Mucosa of descending colon (tissue), 3 donors: ENCODE measurements at regions of chr11 and their contacts with region 1.

Region 1: GRCh38 chr11:68383976-68384501 is 71.6 kb downstream of the LRP5 start:
- DNase-seq: peak in 2 of 3 donors; percentile 78 to 88
- ATAC-seq: no peak
- H3K4me3 ChIP-seq: no peak overlapping the region
- H3K4me1 ChIP-seq: peaks cover 28% of the 10 kb centered on the region
- CTCF ChIP-seq: peak; percentile 87

Region 2: DNA sequence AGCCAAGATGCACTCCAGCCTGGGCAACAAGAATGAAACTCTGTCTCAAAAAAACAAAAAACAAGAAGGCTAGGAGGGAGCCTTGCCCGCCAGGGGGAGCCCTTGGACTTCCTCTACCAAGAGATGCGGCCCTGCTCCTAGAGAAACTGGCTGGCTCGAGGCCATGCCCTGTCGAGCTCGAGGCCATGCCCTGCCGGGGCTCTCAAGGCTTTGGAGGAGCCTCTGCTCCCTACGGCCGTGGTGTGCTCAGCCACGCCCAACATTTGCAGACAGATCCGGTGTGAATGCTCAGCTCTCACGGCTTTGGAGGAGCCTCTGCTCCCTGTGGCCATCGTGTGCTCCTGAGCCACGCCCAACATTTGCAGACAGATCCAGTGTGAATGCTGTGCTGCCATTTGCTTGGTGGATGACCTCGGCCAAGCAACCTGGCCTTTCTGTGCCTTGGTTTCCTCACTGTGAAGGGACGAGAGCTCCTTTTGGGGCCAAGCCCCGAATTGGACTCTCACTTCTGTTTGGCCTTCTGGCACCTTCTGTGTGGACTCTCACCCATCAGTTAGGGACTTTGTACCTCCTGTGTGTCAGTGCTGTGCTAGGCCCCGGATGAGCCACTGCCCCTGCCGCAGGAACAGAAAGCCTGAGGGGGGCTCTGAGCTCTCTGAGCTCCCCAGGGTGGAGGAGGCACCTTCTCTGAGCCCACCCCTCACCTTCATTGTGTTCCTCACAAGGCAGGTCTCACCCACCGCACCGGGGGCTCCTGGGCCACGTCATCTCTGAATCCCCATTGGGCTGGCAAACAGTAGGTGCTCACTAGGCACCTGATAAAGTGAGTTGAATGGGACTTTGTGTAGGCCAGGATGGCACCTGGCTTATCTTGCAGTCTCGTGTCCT is 126.3 kb before region 1 on chr11:
- intact Hi-C with region 1: loop called in 1 of 2 experiments (anchors 10 kb)
- DNase-seq: peak; percentile 96 to 100 (median 97)
- ATAC-seq: peak; percentile 96
- H3K4me3 ChIP-seq: no peak overlapping the region
- H3K4me1 ChIP-seq: peaks cover 6% of the 10 kb centered on the region
- CTCF ChIP-seq: peak; percentile 67

Region 3: DNA sequence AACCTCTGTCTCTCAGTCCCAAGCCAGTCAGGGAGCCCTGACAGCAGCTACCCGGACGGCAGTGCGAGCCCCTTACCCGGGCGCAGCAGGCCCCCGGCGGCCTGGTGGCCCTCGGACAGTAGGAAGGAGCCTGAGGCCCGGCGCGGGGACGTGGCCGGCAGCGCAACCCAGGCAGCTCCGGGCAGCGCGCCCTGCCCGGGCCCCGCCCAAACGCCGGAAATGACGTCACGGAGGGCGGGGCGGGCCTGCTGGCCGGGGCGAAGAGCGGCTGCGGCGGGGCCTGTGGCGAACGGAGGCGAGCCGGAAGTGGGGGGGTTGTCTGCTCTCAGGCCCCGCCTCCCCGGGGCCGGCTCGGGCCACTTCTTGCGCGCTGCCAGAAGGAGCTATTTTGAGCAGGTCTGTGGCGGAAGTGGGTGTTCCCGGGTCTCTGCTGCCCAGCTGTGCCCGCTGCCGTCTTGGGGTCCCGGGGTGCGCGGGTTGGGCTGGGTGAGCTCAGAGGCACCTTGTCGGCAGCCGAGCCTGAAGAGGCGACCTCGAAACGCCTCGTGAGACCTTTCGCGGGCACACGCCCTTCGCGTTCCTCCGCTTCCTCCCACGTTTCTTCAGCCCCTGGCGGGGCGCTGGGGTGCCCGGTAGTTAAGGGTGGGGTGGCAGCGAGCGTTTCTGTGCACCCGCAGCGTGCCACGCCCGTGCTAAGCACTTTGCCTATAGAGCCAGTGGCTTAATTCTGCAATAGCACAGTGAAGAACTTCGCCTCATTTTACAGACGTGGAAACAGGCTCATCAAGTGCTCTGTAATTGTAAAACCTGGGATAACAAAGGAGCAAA is 112.0 kb before region 1 on chr11 and contains the start of gene C11orf24:
- intact Hi-C with region 1: loop called in 1 of 2 experiments (anchors 10 kb)
- DNase-seq: peak; percentile 96 to 97 (median 97)
- ATAC-seq: peak; percentile 96
- H3K4me3 ChIP-seq: peak within 1 kb of the TSS; percentile 54
- H3K4me1 ChIP-seq: peaks cover 10% of the 10 kb centered on the region
- CTCF ChIP-seq: no peak
- total RNA-seq, gene C11orf24: 51.8 to 83.2 (median 53.2) TPM

Region 4: DNA sequence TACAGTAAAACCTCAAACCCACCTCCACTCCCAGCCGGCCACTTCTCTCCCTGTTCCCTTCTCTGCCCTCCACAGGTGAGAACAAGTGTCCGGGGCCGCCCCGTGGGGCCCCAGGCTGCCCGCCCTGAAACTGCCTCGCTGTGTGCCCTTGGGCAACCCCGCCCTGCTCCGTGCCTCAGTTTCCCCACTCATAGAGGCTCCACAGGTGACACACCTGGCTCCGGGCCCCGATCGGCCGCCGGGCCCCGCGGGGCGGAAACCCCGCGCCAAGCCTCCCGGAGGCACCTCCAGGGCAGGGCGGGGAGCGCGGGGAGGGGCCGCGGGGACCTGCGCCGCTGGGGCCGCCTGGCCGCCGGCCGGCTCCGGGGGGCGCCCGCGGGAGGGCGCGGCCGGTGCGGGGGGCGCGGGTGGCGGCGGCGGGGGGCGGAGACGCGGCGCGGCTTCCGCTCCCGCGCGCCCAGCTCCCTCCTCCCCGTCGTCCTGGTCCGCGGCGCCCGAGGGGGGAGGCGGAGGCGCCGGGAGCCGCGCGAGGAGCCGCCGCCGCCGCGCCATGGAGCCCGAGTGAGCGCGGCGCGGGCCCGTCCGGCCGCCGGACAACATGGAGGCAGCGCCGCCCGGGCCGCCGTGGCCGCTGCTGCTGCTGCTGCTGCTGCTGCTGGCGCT is 71.8 kb before region 1 on chr11 and contains the start of gene LRP5:
- intact Hi-C with region 1: loop called in 1 of 2 experiments (anchors 10 kb)
- DNase-seq: peak in 2 of 3 donors; percentile 57 to 78
- ATAC-seq: peak; percentile 50
- H3K4me3 ChIP-seq: peak within 1 kb of the TSS; percentile 42
- H3K4me1 ChIP-seq: peaks cover 38% of the 10 kb centered on the region
- CTCF ChIP-seq: no peak
- total RNA-seq, gene LRP5: 83.7 to 113 (median 103) TPM